CD8-positive, alpha-beta T cell (primary cell): ENCODE measurements at regions of chr2 and their contacts with region 1.

Region 1: GRCh38 chr2:98654699-98655495 is 46.5 kb downstream of the UNC50 start:
- DNase-seq: peak in 5 of 9 experiments; percentile 43 to 90 (median 75)
- ATAC-seq: peak; percentile 51
- H3K4me3 ChIP-seq: no peak overlapping the region
- H3K4me3 Mint-ChIP-seq: peak overlapping the region; percentile 69
- H3K27ac ChIP-seq: peak overlapping the region; percentile 77 to 80
- H3K27ac Mint-ChIP-seq: peak overlapping the region; percentile 99
- H3K4me1 ChIP-seq: peaks cover 92% of the 10 kb centered on the region
- H3K4me1 Mint-ChIP-seq: peaks cover 84% of the 10 kb centered on the region
- H3K27me3 ChIP-seq: no peaks in the 10 kb centered on the region
- H3K27me3 Mint-ChIP-seq: no peaks in the 10 kb centered on the region
- CTCF ChIP-seq: no peak

Region 2: DNA sequence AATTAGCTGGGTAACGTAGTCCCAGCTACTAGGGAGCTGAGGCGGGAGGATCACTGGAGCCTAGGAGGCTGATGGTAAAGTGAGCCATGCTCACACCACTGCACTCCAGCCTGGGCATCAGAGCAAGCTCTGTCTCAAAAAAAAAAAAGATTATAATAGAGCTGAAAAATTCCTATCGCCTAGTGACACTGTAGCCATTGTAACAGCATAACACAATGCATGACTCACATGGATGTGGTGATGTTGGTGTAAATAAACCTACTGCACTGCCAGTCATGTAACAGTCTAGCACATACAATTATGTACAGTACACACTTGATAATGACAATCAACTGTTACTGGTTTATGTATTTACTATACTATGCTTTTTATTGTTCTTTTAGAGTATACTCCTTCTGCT is 36.4 kb after region 1 on chr2:
- CTCF ChIA-PET with region 1: interaction called, 13 read pairs
- POLR2A ChIA-PET with region 1: interaction called, 4 read pairs
- intact Hi-C with region 1: loop called (anchors 5 kb)
- DNase-seq: peak in 2 of 9 experiments; percentile 30 to 53
- ATAC-seq: peak; percentile 65
- H3K4me3 ChIP-seq: no peak overlapping the region
- H3K4me3 Mint-ChIP-seq: peak overlapping the region; percentile 32
- H3K27ac ChIP-seq: peak overlapping the region in 1 of 2 experiments; percentile 10
- H3K27ac Mint-ChIP-seq: peak overlapping the region; percentile 90
- H3K4me1 ChIP-seq: peaks cover 92% of the 10 kb centered on the region
- H3K4me1 Mint-ChIP-seq: peaks cover 85% of the 10 kb centered on the region
- H3K27me3 ChIP-seq: no peaks in the 10 kb centered on the region
- H3K27me3 Mint-ChIP-seq: no peaks in the 10 kb centered on the region
- CTCF ChIP-seq: no peak

Region 3: GRCh38 chr2:100041981-100042380 is 1387.1 kb after region 1 on chr2:
- CTCF ChIA-PET with region 1: no interaction called
- POLR2A ChIA-PET with region 1: no interaction called
- intact Hi-C with region 1: no loop called
- DNase-seq: no peak
- ATAC-seq: no peak
- H3K4me3 ChIP-seq: no peak overlapping the region
- H3K4me3 Mint-ChIP-seq: no peak overlapping the region
- H3K27ac ChIP-seq: no peak overlapping the region
- H3K27ac Mint-ChIP-seq: no peak overlapping the region
- H3K4me1 ChIP-seq: no peaks in the 10 kb centered on the region
- H3K4me1 Mint-ChIP-seq: no peaks in the 10 kb centered on the region
- H3K27me3 ChIP-seq: no peaks in the 10 kb centered on the region
- H3K27me3 Mint-ChIP-seq: no peaks in the 10 kb centered on the region
- CTCF ChIP-seq: no peak